ENCODE measurements at regions of chr16 and their contacts with region 1.

Region 1: GRCh38 chr16:81035398-81035974 is at the start of gene ATMIN:
- DNase-seq: peak; percentile 76 to 89
- ATAC-seq: peak; percentile 91 to 97 (median 96)
- H3K4me3 ChIP-seq: peak within 1 kb of the TSS; percentile 68 to 95 (median 77)
- H3K27ac ChIP-seq: peak within 1 kb of the TSS; percentile 73 to 90 (median 81)
- H3K4me1 ChIP-seq: peaks cover 0 to 43% (median 25%) of the 10 kb centered on the region in 9 donors
- H3K27me3 ChIP-seq: no peaks in the 10 kb centered on the region
- CTCF ChIP-seq: peak; percentile 89 to 98 (median 96)
- total RNA-seq, gene ATMIN: 22.3 to 32.0 (median 29.9) TPM

Region 2: GRCh38 chr16:80718249-80719220 is 317.0 kb before region 1 on chr16:
- intact Hi-C with region 1: no loop called
- DNase-seq: no peak
- ATAC-seq: peak in 2 of 8 donors; percentile 26 to 27
- H3K4me3 ChIP-seq: no peak overlapping the region
- H3K27ac ChIP-seq: no peak overlapping the region
- H3K4me1 ChIP-seq: peaks cover 0 to 11% (median 0%) of the 10 kb centered on the region in 9 donors
- H3K27me3 ChIP-seq: no peaks in the 10 kb centered on the region
- CTCF ChIP-seq: no peak

Region 3: DNA sequence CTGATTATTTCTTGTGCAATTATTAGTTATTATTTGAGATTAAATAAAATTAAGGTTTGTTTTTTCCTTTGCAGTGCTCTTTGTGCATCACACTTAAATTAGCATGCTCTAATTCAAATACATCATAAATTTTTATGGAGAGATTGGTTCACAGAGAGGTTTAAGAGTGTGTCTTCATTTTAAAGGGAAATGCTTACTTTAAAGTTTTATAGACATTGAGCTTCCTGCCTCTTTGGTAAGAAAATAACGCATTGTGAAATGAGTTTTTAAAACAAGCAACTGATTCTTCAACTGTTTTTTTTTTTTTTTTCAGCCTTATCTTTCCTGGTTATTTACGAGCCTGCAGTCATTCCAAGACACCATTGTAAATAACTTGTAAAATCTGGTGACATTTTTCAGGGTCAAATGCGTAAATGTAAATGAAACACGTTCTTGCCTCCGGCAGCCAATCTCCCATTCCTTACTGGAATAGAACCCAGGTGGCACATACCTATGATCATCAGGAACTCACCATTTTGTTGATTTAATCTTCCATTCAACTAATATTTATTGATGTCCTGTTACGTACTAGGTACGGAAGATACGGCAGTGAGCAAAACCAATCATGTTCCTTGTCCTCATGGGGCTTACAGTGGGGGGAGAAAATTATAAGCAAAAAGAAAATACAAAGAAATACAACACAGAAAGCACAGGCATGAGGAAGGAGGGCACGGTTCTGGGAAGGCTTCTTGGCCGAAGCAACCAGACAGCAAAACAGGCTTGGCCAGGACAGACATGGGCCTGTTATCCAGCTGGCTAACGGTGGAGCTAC is 197.9 kb before region 1 on chr16:
- intact Hi-C with region 1: no loop called
- DNase-seq: no peak
- ATAC-seq: no peak
- H3K4me3 ChIP-seq: no peak overlapping the region
- H3K27ac ChIP-seq: no peak overlapping the region
- H3K4me1 ChIP-seq: no peaks in the 10 kb centered on the region
- H3K27me3 ChIP-seq: no peaks in the 10 kb centered on the region
- CTCF ChIP-seq: no peak

Region 4: GRCh38 chr16:81006814-81007696 is 28.4 kb before region 1 on chr16 and contains the starts of genes CENPN and CMC2:
- intact Hi-C with region 1: loop called in 1 of 10 experiments (anchors 1 kb)
- DNase-seq: peak; percentile 98 to 99
- ATAC-seq: peak; percentile 94 to 98 (median 96)
- H3K4me3 ChIP-seq: peak within 1 kb of the TSS; percentile 74 to 98 (median 84)
- H3K27ac ChIP-seq: peak within 1 kb of the TSS; percentile 93 to 100 (median 98)
- H3K4me1 ChIP-seq: peaks cover 4 to 45% (median 29%) of the 10 kb centered on the region in 9 donors
- H3K27me3 ChIP-seq: no peaks in the 10 kb centered on the region
- CTCF ChIP-seq: peak in 2 of 9 donors; percentile 9 to 10
- total RNA-seq, gene CENPN: 6.3 to 16.2 (median 11.0) TPM
- total RNA-seq, gene CMC2: 95.1 to 129 (median 121) TPM

Region 5: DNA sequence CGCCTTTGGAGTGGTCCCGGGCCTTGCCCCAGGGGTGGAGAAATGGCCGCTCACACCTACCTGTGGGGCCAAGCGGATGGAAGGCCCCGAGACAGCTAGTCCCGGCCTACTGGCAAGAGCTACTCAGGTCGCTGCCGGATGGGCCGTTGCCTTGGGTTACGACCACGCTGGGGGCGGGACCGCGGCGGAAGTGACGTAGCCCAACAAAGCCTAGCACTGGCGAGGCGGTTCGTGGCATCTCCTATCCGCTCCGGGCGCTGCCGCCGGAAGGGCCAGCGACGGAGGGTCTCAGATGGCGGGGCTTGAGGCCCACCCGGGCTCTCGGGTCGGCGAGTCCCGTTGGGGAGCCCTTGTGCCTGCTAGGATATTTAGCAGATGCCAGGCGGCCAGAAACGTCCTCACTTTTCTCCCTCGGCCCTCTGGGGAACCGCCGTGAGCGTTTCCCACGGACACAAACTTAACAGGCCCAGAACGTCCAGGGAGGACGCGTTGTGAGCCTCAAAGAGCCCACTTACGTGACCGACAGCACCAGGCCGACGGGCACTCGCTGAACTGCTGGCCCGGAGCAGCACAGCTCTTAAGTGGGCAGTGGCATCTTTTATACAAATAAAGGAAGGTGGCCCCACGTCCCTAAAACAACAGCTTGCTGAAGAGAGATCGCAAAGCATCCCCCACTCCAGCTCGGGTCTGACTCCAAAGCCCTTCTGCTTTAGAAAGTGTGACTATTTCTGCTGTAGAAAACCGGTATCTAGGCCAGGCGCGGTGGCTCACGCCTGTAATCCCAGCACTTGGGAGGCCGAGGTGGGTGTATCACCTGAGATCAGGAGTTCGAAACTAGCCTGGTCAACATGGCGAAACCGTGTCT is 41.8 kb after region 1 on chr16 and contains the start of gene C16orf46:
- intact Hi-C with region 1: loop called in 7 of 10 experiments (anchors 2 to 5 kb)
- DNase-seq: peak; percentile 97 to 98
- ATAC-seq: peak; percentile 98 to 100 (median 99)
- H3K4me3 ChIP-seq: peak within 1 kb of the TSS; percentile 32 to 87 (median 73)
- H3K27ac ChIP-seq: peak within 1 kb of the TSS; percentile 65 to 99 (median 96)
- H3K4me1 ChIP-seq: peaks cover 0 to 13% (median 5%) of the 10 kb centered on the region in 9 donors
- H3K27me3 ChIP-seq: no peaks in the 10 kb centered on the region
- CTCF ChIP-seq: peak in 1 of 9 donors; percentile 3
- total RNA-seq, gene C16orf46: 0.19 to 2.0 (median 0.47) TPM in 8 of 10 donors, not detected in the others

Region 6: GRCh38 chr16:81095953-81096717 is 60.6 kb after region 1 on chr16 and contains the start of gene GCSH:
- intact Hi-C with region 1: loop called in 1 of 10 experiments (anchors 5 kb)
- DNase-seq: peak; percentile 99 to 100
- ATAC-seq: peak; percentile 99 to 100 (median 100)
- H3K4me3 ChIP-seq: peak within 1 kb of the TSS; percentile 61 to 99 (median 92)
- H3K27ac ChIP-seq: peak within 1 kb of the TSS in 9 of 10 donors; percentile 78 to 87 (median 82)
- H3K4me1 ChIP-seq: peaks cover 0 to 12% (median 5%) of the 10 kb centered on the region in 9 donors
- H3K27me3 ChIP-seq: no peaks in the 10 kb centered on the region
- CTCF ChIP-seq: no peak
- total RNA-seq, gene GCSH: 31.2 to 53.4 (median 44.2) TPM

Region 7: DNA sequence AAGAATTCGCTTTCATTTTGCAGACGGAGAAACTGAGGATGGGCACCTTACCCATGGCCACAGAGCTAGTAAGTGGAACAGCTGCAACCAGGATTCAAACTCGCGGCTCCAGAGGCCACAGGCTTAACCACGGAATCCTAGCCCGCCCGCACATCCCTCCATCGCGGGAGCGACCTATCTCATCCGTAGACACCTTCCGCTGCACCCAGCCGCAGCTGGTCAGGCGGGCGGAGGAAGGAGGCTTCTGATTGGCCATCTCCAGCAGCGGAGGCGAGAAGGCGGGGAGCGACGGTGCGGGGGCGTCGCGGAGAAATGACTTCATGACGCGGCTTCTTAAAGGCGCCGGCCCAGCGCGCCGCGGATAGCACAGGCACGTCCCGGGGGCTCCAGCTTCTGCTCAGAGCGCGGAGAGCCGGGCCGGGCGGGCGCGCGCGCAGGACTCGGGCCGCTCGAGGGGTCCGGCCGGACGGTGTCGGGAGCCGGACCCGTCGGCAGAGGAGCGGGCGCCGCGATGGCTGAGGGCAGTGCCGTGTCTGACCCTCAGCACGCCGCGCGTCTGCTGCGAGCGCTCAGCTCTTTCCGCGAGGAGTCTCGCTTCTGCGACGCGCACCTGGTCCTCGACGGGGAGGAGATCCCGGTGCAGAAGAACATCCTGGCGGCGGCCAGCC is 279.3 kb after region 1 on chr16 and contains the start of gene GAN:
- intact Hi-C with region 1: loop called in 1 of 10 experiments (anchors 10 kb)
- DNase-seq: peak; percentile 94 to 95
- ATAC-seq: peak; percentile 97 to 99 (median 98)
- H3K4me3 ChIP-seq: peak within 1 kb of the TSS; percentile 43 to 97 (median 75)
- H3K27ac ChIP-seq: peak within 1 kb of the TSS; percentile 79 to 94 (median 92)
- H3K4me1 ChIP-seq: peaks cover 3 to 50% (median 27%) of the 10 kb centered on the region in 9 donors
- H3K27me3 ChIP-seq: no peaks in the 10 kb centered on the region
- CTCF ChIP-seq: no peak
- total RNA-seq, gene GAN: 9.7 to 17.7 (median 12.8) TPM

Region 8: DNA sequence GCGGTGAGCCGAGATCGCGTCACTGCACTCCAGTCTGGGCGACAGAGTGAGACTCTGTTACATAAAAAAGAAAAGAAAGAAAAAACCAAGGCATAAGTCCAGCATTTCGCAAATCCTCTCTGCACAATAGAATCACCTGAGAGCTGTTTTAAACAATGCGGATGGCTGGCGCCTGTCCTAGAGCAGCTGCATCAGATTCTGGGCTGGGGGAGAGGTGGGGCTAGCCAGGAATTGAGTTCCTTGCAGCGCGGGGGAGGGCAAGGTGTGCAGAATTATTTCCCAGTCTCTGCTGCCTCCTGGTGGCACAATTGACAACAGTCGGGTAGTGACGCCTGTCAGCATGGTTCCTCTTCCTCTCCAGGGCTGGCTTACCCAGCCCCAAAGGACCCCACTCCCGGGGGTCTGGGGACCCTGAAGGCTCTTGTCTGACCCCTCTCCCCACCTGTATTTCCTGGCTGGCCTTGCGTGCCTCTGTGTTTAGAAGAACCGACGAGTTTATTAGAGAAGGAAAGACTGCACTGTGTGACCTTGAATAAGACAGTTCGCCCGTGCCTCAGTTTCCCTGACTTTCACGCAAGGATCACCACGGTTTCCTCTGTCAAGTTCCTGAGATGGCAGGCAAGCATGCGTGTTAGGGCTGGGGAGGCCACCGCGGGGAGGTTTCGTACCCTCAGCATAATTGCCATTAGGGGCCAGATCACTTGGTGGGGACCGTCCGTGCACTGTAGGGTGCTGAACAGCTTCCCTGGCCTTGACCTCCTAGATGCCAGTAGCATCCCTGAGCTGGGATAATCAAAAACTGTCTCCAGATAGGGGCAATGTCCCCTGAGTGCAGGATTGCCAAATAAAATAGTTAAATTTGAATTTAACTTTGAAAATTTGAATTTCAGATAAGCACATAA is 702.6 kb after region 1 on chr16:
- intact Hi-C with region 1: loop called in 4 of 10 experiments (anchors 5 to 10 kb)
- DNase-seq: peak; percentile 68 to 89
- ATAC-seq: peak; percentile 87 to 97 (median 94)
- H3K4me3 ChIP-seq: peak overlapping the region in 7 of 10 donors; percentile 12 to 43 (median 32)
- H3K27ac ChIP-seq: peak overlapping the region in 5 of 10 donors; percentile 25 to 79 (median 61)
- H3K4me1 ChIP-seq: peaks cover 0 to 24% (median 9%) of the 10 kb centered on the region in 9 donors
- H3K27me3 ChIP-seq: peaks cover 0 to 9% (median 0%) of the 10 kb centered on the region in 7 donors
- CTCF ChIP-seq: peak; percentile 61 to 91 (median 85)

Region 9: DNA sequence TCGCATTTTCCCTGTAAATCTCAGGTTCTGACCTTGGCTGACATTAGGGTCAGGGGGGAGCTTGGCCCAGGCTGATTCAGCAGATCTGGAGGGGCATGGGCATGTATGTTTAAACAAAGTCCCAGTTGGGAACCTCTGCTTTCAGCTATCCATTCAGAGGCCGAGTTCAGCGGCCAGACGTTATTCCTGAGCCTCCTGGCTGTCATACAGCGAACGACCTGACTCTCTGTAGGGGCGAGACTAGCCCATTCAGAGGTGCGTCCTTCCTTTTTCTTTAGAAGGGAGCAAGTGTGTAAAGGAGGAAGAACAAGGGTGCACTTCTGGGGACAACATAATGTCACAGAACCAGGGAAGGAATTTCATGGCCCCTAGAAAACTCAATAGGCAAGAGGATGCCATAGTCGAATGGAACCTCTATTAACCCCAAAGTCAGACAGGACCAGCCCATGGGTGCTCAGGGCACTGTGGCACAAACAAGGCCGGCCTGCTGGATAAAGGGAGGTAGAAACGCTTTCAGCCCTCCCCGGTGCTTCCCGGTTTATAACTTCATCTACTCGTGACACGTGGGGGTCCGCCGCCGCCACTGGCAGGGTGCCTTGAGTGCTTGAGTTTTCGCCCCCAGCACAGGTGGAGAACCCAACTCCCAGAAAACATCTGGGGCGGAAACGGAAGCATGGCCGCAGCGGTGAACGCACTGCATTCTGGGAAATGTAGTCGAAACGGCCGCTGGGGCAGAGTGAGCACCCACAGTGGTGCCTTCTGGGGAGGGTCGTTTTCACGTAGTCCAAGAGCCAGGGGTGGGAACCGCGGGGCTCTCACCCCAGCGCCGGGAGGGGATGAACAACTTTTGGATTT is 710.4 kb after region 1 on chr16:
- intact Hi-C with region 1: loop called in 1 of 10 experiments (anchors 10 kb)
- DNase-seq: peak; percentile 71 to 76
- ATAC-seq: peak; percentile 87 to 94 (median 90)
- H3K4me3 ChIP-seq: peak overlapping the region in 9 of 10 donors; percentile 17 to 60 (median 48)
- H3K27ac ChIP-seq: peak overlapping the region in 4 of 10 donors; percentile 15 to 69 (median 49)
- H3K4me1 ChIP-seq: peaks cover 0 to 26% (median 0%) of the 10 kb centered on the region in 9 donors
- H3K27me3 ChIP-seq: peaks cover 0 to 4% (median 0%) of the 10 kb centered on the region in 7 donors
- CTCF ChIP-seq: no peak

Measured in heart right ventricle (tissue), 16 donors.